ENCODE measurements at regions of chr11 and their contacts with region 1.

Region 1: GRCh38 chr11:130069684-130070108 is at the start of gene APLP2:
- DNase-seq: peak; percentile 96
- H3K4me3 Mint-ChIP-seq: peak within 1 kb of the TSS; percentile 94
- H3K27ac Mint-ChIP-seq: peak within 1 kb of the TSS; percentile 89
- H3K4me1 Mint-ChIP-seq: peaks cover 17% of the 10 kb centered on the region
- H3K27me3 Mint-ChIP-seq: peaks cover 25% of the 10 kb centered on the region
- total RNA-seq, gene APLP2: 47.0 and 47.8 TPM in 2 replicates

Region 2: GRCh38 chr11:128453444-128454336 is 1616.0 kb before region 1 on chr11:
- intact Hi-C with region 1: no loop called
- DNase-seq: no peak
- H3K4me3 Mint-ChIP-seq: no peak overlapping the region
- H3K27ac Mint-ChIP-seq: peak overlapping the region; percentile 74
- H3K4me1 Mint-ChIP-seq: peaks cover 70% of the 10 kb centered on the region
- H3K27me3 Mint-ChIP-seq: no peaks in the 10 kb centered on the region

Region 3: GRCh38 chr11:129815596-129816461 is 253.9 kb before region 1 on chr11 and contains the start of gene TMEM45B:
- intact Hi-C with region 1: loop called (anchors 5 kb)
- DNase-seq: no peak
- H3K4me3 Mint-ChIP-seq: peak within 1 kb of the TSS; percentile 69
- H3K27ac Mint-ChIP-seq: peak within 1 kb of the TSS; percentile 67
- H3K4me1 Mint-ChIP-seq: peaks cover 26% of the 10 kb centered on the region
- H3K27me3 Mint-ChIP-seq: peaks cover 46% of the 10 kb centered on the region
- total RNA-seq, gene TMEM45B: 0.24 and 0.26 TPM in 2 replicates

Region 4: DNA sequence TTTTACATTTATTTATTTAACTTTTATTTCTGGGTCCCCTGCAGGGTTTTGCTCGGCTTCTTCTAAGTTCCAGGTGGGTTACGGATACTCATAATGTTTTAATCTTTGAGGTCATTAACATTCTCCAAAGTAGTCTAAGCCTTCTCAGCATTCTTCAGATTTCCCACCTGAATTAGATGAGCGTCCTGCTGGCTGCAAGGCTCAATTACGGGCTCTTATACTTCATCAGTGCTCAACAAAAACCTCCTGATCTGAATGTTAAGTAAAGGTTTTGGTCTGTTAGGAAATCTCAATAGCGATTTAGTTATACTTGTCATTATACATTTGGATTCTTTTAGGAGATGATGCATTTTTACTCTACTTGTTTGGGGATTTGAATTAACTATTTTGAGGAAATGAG is 147.0 kb before region 1 on chr11:
- intact Hi-C with region 1: loop called (anchors 1 kb)
- DNase-seq: no peak
- H3K4me3 Mint-ChIP-seq: no peak overlapping the region
- H3K27ac Mint-ChIP-seq: no peak overlapping the region
- H3K4me1 Mint-ChIP-seq: peaks cover 20% of the 10 kb centered on the region
- H3K27me3 Mint-ChIP-seq: no peaks in the 10 kb centered on the region

Region 5: GRCh38 chr11:129950101-129951091 is 119.3 kb before region 1 on chr11:
- intact Hi-C with region 1: no loop called
- DNase-seq: no peak
- H3K4me3 Mint-ChIP-seq: no peak overlapping the region
- H3K27ac Mint-ChIP-seq: no peak overlapping the region
- H3K4me1 Mint-ChIP-seq: peaks cover 19% of the 10 kb centered on the region
- H3K27me3 Mint-ChIP-seq: no peaks in the 10 kb centered on the region

Region 6: DNA sequence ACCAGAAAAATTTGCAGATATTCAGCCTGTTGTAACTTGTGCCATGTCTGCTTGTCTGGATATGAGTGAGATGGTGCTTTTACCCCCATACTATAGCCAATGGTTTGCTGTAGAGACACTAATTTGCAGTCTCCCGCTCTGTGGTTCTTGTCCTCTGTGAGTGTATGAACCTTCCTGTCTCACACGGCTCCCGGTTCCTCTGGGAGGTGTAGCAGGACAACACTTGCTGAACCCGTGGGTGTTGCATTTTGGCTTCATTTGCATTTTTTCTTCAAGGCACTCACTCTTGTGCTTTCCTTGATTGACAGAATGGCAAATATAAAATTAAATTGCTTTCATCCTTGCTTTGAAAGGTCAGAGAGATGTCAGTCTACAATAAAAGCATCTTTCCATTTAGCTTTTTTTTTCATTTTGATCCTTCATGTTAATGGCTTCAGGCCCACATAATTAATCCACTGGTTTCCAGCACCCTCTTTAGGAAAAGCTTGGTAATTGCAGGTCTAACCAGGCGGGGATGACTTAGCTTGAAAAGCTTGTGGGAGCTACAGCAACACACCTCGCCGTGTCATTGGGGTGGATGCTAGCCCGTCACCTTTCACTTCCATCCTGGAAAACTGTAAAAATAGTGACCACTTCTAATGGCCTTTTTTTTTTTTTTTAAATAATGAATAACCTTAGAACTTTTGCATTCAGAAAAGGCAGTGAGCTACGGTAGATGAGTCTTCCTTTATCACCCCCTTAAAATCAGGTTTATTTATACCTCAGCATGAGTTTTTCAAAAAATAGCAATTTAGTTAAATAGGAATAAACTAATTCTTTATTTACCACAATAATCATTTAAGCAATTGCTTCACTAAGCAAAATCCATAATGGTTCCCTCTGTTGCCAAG is 62.5 kb after region 1 on chr11:
- intact Hi-C with region 1: loop called (anchors 1 kb)
- DNase-seq: peak; percentile 46
- H3K4me3 Mint-ChIP-seq: no peak overlapping the region
- H3K27ac Mint-ChIP-seq: no peak overlapping the region
- H3K4me1 Mint-ChIP-seq: no peaks in the 10 kb centered on the region
- H3K27me3 Mint-ChIP-seq: no peaks in the 10 kb centered on the region